ENCODE measurements at regions of chr12 and their contacts with region 1.

Region 1: GRCh38 chr12:38691164-38691563 is 214.2 kb downstream of the CPNE8 start:
- DNase-seq: no peak
- H3K4me3 ChIP-seq: no peak overlapping the region
- H3K27ac ChIP-seq: no peak overlapping the region
- H3K4me1 ChIP-seq: no peaks in the 10 kb centered on the region
- CTCF ChIP-seq: no peak

Region 2: GRCh38 chr12:38282886-38283285 is 408.3 kb before region 1 on chr12:
- CTCF ChIA-PET with region 1: no interaction called
- POLR2A ChIA-PET with region 1: no interaction called
- intact Hi-C with region 1: no loop called
- DNase-seq: no peak
- H3K4me3 ChIP-seq: no peak overlapping the region
- H3K27ac ChIP-seq: no peak overlapping the region
- H3K4me1 ChIP-seq: no peaks in the 10 kb centered on the region
- CTCF ChIP-seq: no peak

Region 3: DNA sequence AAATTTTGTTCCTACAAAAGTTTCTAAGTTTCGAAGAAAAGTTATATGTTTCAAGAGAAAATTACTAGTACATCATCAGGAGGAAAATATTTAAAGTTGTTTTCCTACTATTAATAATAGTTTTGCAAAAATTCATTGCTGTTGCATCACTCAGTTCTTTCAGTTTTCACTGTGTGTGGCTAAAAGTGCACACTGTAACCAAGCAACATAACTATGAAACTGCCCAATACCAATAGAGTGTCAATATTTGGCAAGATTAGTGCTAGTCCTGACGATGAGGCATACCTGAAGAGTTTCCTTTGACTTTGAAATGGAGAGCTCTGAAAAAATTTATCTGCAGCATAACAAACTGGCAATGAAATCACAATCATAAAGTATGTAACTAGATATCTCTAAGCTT is 19.9 kb after region 1 on chr12:
- CTCF ChIA-PET with region 1: no interaction called
- POLR2A ChIA-PET with region 1: interaction called, 10 read pairs
- intact Hi-C with region 1: no loop called
- DNase-seq: no peak
- H3K4me3 ChIP-seq: no peak overlapping the region
- H3K27ac ChIP-seq: no peak overlapping the region
- H3K4me1 ChIP-seq: no peaks in the 10 kb centered on the region
- CTCF ChIP-seq: no peak

Measured in OCI-LY7 (cell line).